GM23248 (cell line): ENCODE measurements at regions of chr22 and their contacts with region 1.

Region 1: DNA sequence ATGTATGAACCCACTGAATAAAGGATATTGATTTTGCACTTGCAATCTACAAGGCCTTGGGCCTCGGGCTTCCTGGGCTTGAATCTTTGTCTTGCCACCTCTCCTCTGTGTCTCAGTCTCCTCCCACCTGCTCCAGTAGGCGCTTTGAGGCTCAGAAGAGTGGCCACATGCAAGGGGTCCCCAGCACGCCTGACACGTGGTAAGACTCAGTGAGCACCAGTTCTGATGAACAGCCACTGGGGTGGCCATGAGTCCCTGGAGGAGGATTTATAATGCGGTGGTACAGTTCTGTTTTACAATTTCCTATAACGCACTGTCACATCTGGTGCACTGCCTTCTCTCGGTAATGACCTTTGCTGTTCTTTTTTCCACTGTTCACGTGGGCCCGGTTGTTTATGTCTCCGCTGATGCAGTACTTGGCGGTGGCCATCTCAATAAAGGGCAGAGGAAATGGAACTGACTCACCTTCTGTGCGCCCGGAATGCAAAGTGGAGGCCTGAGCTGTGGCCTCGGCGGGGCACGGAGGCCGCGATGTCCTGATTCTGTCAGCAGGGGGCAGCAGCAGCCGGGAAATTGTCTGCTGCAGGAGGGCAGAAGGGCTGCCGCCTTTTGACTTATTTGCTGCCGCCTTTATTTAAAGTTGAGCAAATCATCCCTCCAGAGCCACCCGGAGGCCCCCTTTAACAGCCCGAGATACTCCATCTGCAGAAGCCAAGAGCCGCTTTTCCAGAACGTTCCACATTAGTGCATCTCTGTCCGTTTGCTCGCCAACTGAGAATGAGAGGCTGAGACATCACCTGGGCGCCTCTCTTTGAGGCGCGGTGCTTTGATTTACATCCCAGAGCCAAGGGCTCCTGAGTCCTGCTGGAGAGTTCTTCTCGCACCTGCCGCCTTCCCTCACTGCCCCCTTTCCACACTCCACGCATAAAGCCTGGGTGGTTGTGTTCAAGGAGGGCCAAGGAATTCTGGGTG is 6.0 kb upstream of the IFT27 start:
- DNase-seq: peak; percentile 96
- H3K4me3 ChIP-seq: no peak overlapping the region
- H3K27ac ChIP-seq: peak overlapping the region; percentile 58
- H3K4me1 ChIP-seq: 0 out of 2 replicates have a peak, but pooled peaks cover 5% of the 10 kb centered on the region
- H3K27me3 ChIP-seq: peaks cover 21% of the 10 kb centered on the region

Region 2: GRCh38 chr22:36986242-36986821 is 204.4 kb after region 1 on chr22:
- in situ Hi-C with region 1: loop called (anchors 10 kb)
- DNase-seq: no peak
- H3K4me3 ChIP-seq: no peak overlapping the region
- H3K27ac ChIP-seq: no peak overlapping the region
- H3K4me1 ChIP-seq: no peaks in the 10 kb centered on the region
- H3K27me3 ChIP-seq: peaks cover 42% of the 10 kb centered on the region